Activated naive CD4-positive, alpha-beta T cell treated with anti-CD3 and anti-CD28 coated beads for 36 hours (primary cell): ENCODE measurements at regions of chr5 and their contacts with region 1.

Region 1: GRCh38 chr5:66306105-66306843 is 162.2 kb downstream of the SREK1 start:
- DNase-seq: peak; percentile 52
- H3K4me3 Mint-ChIP-seq: no peak overlapping the region
- H3K27ac Mint-ChIP-seq: no peak overlapping the region
- H3K4me1 Mint-ChIP-seq: no peaks in the 10 kb centered on the region
- H3K27me3 Mint-ChIP-seq: peaks cover 8% of the 10 kb centered on the region

Region 2: GRCh38 chr5:65742565-65743231 is 563.6 kb before region 1 on chr5:
- CTCF ChIA-PET with region 1: interaction called, 3 read pairs
- intact Hi-C with region 1: loop called (anchors 1 kb)
- DNase-seq: peak; percentile 49
- H3K4me3 Mint-ChIP-seq: no peak overlapping the region
- H3K27ac Mint-ChIP-seq: no peak overlapping the region
- H3K4me1 Mint-ChIP-seq: peaks cover 13% of the 10 kb centered on the region
- H3K27me3 Mint-ChIP-seq: no peaks in the 10 kb centered on the region

Region 3: DNA sequence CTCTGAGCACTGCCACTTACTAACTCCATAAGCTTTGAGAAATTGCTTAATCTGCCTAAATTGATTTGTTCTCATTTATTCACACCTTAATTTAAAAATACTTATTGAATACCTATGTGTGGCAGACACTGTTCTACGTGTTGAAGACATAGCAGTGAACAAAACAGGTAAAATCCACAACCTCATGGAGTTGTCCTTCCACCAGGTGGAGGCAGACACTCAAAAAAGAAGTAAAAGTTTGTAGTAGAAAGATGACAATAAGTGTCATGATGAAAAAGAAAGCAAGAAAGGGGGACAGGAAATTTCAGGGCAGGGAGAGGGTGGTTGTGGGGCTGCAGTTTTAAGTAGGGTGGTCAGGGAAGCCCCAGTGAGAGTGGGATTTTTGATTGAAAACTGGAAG is 67.2 kb before region 1 on chr5:
- CTCF ChIA-PET with region 1: interaction called, 8 read pairs
- intact Hi-C with region 1: loop called (anchors 2 kb)
- DNase-seq: peak; percentile 11
- H3K4me3 Mint-ChIP-seq: no peak overlapping the region
- H3K27ac Mint-ChIP-seq: no peak overlapping the region
- H3K4me1 Mint-ChIP-seq: no peaks in the 10 kb centered on the region
- H3K27me3 Mint-ChIP-seq: peaks cover 8% of the 10 kb centered on the region

Region 4: DNA sequence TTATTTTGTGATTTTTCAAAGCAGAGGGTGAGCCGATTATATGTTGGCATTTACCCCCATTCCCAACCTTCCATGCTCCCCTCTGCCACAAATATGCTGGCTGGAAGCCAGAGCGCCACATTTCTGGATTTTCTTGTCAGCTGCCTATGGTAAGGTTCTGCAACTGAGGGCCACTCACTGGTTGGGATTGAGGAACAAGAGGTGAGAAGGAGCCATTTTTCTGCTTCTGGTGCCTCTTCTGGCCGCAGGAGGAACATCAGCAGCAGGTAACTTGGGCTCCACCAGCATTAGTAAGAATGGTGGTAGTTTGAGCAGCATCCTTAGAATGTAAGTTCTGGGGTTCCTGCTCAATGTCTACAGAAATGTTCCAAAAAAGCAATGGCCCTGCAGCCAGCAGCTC is 130.4 kb after region 1 on chr5:
- CTCF ChIA-PET with region 1: interaction called, 5 read pairs
- intact Hi-C with region 1: loop called (anchors 5 kb)
- DNase-seq: no peak
- H3K4me3 Mint-ChIP-seq: no peak overlapping the region
- H3K27ac Mint-ChIP-seq: no peak overlapping the region
- H3K4me1 Mint-ChIP-seq: peaks cover 6% of the 10 kb centered on the region
- H3K27me3 Mint-ChIP-seq: peaks cover 4% of the 10 kb centered on the region

Region 5: GRCh38 chr5:66463285-66463684 is 157.0 kb after region 1 on chr5:
- CTCF ChIA-PET with region 1: no interaction called
- intact Hi-C with region 1: no loop called
- DNase-seq: no peak
- H3K4me3 Mint-ChIP-seq: no peak overlapping the region
- H3K27ac Mint-ChIP-seq: no peak overlapping the region
- H3K4me1 Mint-ChIP-seq: no peaks in the 10 kb centered on the region
- H3K27me3 Mint-ChIP-seq: peaks cover 4% of the 10 kb centered on the region

Region 6: GRCh38 chr5:66757188-66757833 is 451.0 kb after region 1 on chr5:
- CTCF ChIA-PET with region 1: interaction called, 73 read pairs
- intact Hi-C with region 1: loop called (anchors 1 kb)
- DNase-seq: peak; percentile 73
- H3K4me3 Mint-ChIP-seq: no peak overlapping the region
- H3K27ac Mint-ChIP-seq: no peak overlapping the region
- H3K4me1 Mint-ChIP-seq: no peaks in the 10 kb centered on the region
- H3K27me3 Mint-ChIP-seq: peaks cover 3% of the 10 kb centered on the region

Region 7: GRCh38 chr5:67118050-67118620 is 811.9 kb after region 1 on chr5:
- CTCF ChIA-PET with region 1: no interaction called
- intact Hi-C with region 1: no loop called
- DNase-seq: no peak
- H3K4me3 Mint-ChIP-seq: no peak overlapping the region
- H3K27ac Mint-ChIP-seq: no peak overlapping the region
- H3K4me1 Mint-ChIP-seq: no peaks in the 10 kb centered on the region
- H3K27me3 Mint-ChIP-seq: no peaks in the 10 kb centered on the region

Region 8: GRCh38 chr5:67156976-67157583 is 850.8 kb after region 1 on chr5:
- CTCF ChIA-PET with region 1: no interaction called
- intact Hi-C with region 1: loop called (anchors 5 kb)
- DNase-seq: peak; percentile 70
- H3K4me3 Mint-ChIP-seq: no peak overlapping the region
- H3K27ac Mint-ChIP-seq: no peak overlapping the region
- H3K4me1 Mint-ChIP-seq: peaks cover 35% of the 10 kb centered on the region
- H3K27me3 Mint-ChIP-seq: no peaks in the 10 kb centered on the region